GM10248 (cell line): ENCODE measurements at regions of chr2 and their contacts with region 1.

Region 1: DNA sequence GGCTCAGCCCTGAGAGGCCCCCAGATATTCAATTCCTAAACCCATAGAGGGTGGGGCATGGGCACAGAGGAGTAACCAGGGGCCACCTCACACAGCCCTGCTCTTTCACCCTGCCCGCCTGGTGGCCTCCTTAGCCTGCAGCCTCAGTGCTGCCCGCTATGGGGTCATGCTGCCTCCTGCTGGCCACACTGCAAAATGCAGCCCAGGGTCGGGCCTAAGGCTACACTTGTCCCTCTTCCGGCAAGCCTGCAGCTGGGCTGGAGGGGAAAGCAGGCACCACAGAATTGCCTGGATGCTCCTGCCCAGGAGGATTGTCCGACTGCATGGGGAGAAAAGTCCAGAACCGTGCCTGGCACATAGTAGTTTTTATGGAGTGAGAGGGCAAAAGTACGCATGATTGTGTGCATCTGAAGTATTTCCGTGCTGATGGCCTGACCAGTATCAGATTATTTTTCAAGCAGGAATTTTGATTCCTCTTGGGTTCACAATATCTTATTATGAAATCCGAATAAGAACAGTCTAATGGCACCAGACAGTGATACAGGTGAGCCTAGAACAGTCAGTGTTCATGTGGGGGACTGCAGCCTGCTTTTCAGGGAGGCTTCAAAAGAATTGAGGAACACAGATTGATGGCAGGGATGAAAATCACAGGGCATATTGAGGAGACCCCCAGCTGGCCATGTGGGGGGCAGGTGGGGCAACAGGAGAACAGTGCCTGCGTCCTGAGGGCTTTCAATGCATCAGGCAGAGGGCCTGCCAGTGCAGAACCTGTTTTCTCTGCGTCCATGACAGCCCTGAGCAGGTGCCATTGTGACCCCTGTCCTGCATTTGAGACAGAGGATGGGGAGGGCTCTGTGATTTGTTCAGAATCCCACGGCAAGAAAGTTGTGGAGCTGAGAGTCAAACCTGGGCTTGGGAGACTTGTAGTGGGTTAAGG is 51.2 kb upstream of the ALPP start:
- DNase-seq: peak; percentile 81
- CTCF ChIP-seq: peak; percentile 88

Region 2: DNA sequence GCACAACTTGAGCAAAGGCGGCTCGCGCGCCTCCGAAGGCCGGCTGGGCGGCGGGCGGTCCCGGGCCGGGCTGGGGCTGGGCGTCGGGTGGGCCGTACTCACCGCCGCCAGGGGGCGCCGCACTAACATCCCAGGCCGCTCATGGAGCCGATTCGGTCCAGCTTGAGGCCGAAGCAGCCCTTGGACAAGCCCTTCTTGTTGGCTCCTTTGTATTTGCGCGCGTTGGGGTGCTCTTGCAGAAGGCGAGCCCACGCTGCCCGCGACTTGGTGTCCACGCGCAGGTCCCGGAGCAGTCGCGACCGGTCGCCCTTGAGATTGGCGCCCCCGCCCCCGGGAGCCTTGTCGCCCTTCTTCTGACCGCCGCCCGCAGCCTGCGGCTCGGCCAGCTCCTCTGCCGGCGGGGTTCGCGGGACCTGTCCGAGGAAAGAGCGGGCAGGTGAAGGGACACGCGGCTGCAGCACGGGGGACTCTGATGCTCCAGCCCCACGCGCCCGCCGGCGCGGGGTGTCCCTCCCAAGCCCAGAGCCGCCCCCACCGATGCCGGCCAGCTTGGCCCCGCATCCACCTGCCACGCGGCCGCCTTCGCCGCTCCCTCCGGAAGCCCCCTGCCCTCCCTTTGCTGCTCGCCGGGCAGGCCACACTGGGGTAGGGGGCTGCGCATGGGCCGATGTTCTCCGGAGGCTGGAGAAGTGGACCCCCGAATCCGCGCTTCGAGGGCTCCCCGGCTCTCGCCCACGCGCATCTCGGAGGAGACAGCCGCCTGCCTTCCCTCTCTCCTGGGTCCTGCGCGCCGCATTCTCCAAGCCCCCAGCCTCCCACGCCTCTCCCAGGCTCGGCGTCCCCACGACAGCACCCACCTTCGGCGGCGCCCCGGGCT is 401.8 kb before region 1 on chr2:
- CTCF ChIA-PET with region 1: interaction called, 66 read pairs
- POLR2A ChIA-PET with region 1: no interaction called
- DNase-seq: peak; percentile 88
- CTCF ChIP-seq: peak; percentile 70

Region 3: GRCh38 chr2:232300894-232301387 is 26.4 kb before region 1 on chr2:
- CTCF ChIA-PET with region 1: interaction called, 17 read pairs
- POLR2A ChIA-PET with region 1: no interaction called
- DNase-seq: no peak
- CTCF ChIP-seq: no peak

Region 4: DNA sequence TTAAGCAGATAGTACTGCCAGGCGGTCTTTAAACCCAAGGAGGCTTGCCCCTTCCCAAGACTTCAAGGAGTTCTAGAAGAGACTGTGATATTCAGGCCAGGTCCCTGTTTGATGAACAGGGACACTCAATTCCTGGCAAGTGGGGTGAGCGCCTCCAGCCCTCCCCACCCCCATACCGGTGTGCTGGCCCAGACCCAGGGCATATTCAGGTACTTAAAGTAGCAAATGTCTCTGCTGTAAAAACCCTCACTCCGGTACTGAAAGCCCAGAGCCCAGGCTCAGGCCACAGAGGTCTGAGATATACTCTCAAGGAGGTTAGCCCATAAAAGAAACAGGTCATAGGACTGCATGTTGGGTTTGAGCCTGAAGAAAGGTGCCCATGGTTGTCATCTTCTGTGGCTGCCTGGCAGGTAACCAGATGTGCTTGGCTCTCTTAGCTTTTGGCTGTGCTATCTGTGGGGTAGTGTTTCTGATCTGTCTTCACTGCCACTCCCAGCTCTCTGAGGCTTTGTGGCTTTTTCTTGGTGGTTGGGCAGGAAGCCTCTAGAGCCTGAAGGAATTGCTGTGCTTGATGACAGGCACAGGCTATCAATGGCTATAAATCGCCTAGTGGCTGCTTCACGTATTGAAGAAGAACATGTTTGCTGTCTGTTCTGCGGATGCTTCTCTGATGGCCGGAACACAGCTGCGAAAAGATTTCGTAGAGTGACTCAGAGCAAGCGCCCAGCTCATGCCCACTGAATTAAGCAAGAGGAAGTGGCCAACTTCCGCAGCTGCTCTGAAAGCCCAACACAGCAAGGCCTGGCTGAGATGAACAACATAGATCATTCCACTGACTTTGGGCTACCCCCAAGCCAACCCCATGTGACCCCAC is 12.1 kb before region 1 on chr2:
- CTCF ChIA-PET with region 1: interaction called, 50 read pairs
- POLR2A ChIA-PET with region 1: no interaction called
- DNase-seq: peak; percentile 58
- CTCF ChIP-seq: peak; percentile 13

Region 5: DNA sequence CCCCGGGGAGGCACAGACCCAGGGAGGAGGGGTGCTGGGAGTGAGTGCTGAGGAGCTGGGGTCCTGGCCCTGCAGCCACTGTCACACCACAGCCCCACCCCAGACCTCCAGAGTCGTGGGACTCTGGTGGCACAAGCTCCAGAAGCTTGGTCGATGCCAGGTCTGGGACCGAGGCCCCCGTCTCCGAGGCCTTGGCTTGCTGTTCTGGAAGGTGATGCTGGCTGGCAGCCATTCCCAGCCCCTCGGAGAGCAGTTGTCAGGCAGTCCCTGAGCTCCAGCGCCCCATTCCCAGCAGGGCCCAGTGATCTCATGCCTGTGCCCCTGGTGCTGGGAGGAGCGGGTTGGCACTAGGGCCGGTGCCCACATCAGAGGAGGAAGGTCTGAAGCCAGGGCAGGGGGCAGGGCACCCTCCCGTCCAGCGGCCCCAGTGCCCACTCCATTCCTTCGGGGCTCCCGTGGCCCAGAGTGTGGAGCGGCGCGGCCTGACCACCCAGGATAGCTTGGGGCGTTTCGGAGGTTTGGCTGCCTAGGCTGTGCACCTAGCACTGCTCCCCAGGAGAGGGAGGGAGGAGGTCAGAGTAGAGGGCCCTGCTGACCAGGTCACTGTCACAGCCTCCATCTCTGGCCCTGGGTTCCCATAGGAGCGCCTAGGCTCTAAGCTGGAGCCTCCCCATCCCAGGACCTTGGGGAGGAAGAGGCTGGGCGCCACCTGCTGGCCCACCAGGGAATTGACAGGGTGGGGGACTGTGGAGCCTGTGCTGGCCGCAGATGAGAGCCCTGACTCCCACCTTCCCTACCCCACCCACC is 111.8 kb after region 1 on chr2:
- CTCF ChIA-PET with region 1: interaction called, 19 read pairs
- POLR2A ChIA-PET with region 1: no interaction called
- DNase-seq: no peak
- CTCF ChIP-seq: peak; percentile 60